ENCODE measurements at regions of chr16 and their contacts with region 1.

Region 1: DNA sequence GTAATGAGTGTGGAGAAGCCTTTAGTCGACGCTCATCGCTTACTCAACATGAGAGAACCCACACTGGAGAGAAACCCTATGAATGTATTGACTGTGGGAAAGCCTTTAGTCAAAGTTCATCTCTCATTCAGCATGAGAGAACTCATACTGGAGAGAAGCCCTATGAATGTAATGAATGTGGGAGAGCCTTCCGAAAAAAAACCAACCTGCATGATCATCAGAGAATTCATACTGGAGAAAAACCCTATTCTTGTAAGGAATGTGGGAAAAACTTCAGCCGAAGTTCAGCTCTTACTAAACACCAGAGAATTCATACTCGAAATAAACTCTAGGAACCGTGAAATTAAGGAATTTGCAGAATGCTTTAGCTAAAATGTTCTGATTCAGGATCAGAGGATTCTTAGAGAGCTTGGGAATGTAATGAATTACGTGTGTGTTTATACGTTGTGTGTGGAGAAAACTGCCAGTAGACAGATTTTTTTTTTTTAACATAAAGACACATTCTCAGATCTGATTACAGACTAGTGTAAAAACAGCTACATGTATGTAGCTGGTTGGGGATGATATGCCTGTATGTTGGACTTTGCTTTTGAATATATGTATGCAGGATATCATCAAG is 25.4 kb downstream of the ZFP90 start:
- DNase-seq: no peak
- ATAC-seq: no peak
- H3K4me3 ChIP-seq: no peak overlapping the region
- H3K27ac ChIP-seq: no peak overlapping the region
- H3K4me1 ChIP-seq: no peaks in the 10 kb centered on the region
- H3K27me3 ChIP-seq: no peaks in the 10 kb centered on the region
- CTCF ChIP-seq: no peak
- POLR2A ChIP-seq: no peak

Region 2: DNA sequence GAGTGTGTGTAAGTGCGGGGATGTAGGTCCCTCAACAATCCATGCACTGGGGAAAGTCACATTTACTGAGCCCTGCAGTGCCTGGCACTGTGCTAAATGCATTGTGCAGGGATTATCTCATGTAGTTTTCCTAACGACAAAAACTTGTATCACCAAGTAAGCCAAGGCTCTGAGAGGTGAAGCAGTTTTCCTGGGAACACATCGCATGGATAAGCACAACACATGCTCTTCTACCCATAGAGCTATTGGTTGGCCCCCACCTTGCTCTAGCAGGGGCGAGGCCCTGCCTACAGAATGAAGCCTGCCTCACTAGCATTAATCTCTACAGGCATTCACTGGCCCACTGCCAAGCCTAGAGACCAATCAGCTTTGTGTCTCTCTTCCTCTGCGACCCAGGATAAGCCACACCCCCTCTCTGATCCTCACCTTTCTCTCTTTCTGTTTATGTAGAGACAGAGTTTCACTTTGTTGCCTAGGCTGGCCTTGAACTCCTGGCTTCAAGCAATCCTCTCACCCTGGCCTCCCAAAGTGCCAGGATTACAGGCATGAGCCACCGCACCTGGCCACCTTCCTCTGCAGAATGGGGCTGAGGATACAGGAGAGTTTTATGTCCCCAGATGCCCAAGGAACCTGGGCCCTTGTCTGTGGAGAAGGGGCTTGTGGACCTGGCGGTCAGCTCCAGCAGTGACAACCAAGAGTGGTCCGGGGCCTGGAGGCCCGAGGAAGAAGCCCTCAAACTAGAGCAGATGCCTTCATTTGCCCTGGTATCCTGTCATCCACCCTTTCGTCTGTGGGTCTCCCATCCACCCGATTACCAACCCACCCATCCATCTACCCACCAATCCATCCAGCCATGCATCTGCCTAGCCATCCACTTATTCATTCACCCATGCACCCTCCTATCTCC is 1658.6 kb before region 1 on chr16:
- intact Hi-C with region 1: no loop called
- DNase-seq: peak in 4 of 5 donors; percentile 83 to 95 (median 86)
- ATAC-seq: peak; percentile 9 to 41 (median 26)
- H3K4me3 ChIP-seq: peak overlapping the region in 5 of 12 donors; percentile 45 to 58 (median 54)
- H3K27ac ChIP-seq: peak overlapping the region; percentile 77 to 100 (median 96)
- H3K4me1 ChIP-seq: peaks cover 0 to 70% (median 38%) of the 10 kb centered on the region in 12 donors
- H3K27me3 ChIP-seq: no peaks in the 10 kb centered on the region
- CTCF ChIP-seq: no peak
- POLR2A ChIP-seq: peak in 1 of 2 donors; percentile 37

Region 3: DNA sequence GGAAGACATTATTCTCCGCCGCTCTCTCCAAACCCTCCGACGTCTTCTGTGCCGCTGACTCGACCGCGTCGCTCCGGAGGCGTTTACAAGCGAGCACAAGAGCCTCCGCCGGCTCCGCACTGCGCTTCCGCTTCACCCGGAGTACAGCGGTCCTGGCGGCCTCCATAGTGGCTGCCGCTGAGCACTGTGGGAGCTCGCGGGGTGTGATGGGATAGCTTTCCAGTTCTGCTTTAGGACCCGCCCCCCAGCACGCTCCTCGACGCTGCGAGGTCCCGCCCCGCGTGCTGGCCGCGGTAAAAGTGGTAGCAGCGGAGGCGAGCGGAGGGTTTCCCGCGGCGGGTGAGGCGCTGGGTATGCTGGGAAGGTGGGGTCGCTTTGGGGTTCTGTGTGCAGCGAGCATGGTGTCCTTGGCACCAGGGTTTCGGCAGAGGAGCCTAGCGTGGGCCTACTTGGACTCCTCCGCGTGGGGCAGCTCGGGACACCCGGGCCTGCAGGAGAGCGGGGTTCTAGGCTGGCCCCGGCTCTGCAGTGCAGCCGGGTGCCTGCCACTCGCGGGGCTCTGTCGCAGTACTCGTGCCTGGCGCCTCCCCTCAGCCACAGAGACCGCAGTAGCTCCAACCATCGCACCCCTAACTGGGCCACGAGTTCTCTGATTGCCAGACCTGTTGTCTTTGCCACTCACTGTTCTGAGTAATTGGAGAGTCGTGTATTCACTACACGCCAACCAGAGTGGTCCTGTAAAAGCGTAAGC is 253.5 kb before region 1 on chr16 and contains the starts of genes PRMT7 and SLC7A6OS:
- intact Hi-C with region 1: no loop called
- DNase-seq: peak; percentile 91 to 94 (median 93)
- ATAC-seq: peak; percentile 100
- H3K4me3 ChIP-seq: peak within 1 kb of the TSS; percentile 69 to 98 (median 89)
- H3K27ac ChIP-seq: peak within 1 kb of the TSS; percentile 15 to 95 (median 83)
- H3K4me1 ChIP-seq: peaks cover 6 to 37% (median 26%) of the 10 kb centered on the region in 12 donors
- H3K27me3 ChIP-seq: no peaks in the 10 kb centered on the region
- CTCF ChIP-seq: peak in 7 of 12 donors; percentile 27 to 64 (median 39)
- POLR2A ChIP-seq: peak in 1 of 2 donors; percentile 76
- total RNA-seq, gene PRMT7: 21.9 to 34.0 (median 30.7) TPM
- total RNA-seq, gene SLC7A6OS: 8.1 to 16.2 (median 11.2) TPM

Region 4: GRCh38 chr16:68538880-68539701 is 25.4 kb before region 1 on chr16 and contains the start of gene ZFP90:
- intact Hi-C with region 1: no loop called
- DNase-seq: peak; percentile 88 to 95 (median 91)
- ATAC-seq: peak; percentile 96 to 100 (median 100)
- H3K4me3 ChIP-seq: peak within 1 kb of the TSS; percentile 71 to 100 (median 89)
- H3K27ac ChIP-seq: peak within 1 kb of the TSS; percentile 28 to 88 (median 78)
- H3K4me1 ChIP-seq: peaks cover 0 to 13% (median 6%) of the 10 kb centered on the region in 12 donors
- H3K27me3 ChIP-seq: no peaks in the 10 kb centered on the region
- CTCF ChIP-seq: peak in 1 of 12 donors; percentile 19
- POLR2A ChIP-seq: peak in 1 of 2 donors; percentile 71
- total RNA-seq, gene ZFP90: 6.9 to 18.1 (median 12.0) TPM

Region 5: DNA sequence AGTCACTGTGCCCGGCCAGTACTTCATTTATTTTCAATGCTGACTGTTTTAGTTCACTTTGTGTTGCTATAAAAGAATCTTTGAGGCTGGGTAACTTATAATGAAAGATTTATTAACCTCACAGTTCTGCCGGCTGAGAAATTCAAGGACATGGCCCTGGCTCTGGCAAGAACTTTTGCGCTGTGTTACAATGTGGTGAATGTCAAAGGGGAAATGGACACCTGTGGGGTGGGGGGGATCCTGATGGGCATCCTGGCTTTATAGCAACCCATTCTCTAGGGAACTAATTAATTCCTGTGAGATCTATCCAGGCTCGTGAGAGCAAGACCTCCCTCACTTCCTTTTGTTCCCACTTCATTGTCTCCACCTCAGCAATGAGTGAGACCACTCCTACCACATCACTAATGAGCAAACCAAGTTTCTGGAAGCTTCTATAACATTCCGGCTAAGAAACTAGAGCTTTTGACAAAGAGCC is 63.5 kb after region 1 on chr16:
- intact Hi-C with region 1: loop called in 1 of 10 experiments (anchors 10 kb)
- DNase-seq: no peak
- ATAC-seq: no peak
- H3K4me3 ChIP-seq: no peak overlapping the region
- H3K27ac ChIP-seq: no peak overlapping the region
- H3K4me1 ChIP-seq: no peaks in the 10 kb centered on the region
- H3K27me3 ChIP-seq: no peaks in the 10 kb centered on the region
- CTCF ChIP-seq: no peak
- POLR2A ChIP-seq: no peak

Region 6: DNA sequence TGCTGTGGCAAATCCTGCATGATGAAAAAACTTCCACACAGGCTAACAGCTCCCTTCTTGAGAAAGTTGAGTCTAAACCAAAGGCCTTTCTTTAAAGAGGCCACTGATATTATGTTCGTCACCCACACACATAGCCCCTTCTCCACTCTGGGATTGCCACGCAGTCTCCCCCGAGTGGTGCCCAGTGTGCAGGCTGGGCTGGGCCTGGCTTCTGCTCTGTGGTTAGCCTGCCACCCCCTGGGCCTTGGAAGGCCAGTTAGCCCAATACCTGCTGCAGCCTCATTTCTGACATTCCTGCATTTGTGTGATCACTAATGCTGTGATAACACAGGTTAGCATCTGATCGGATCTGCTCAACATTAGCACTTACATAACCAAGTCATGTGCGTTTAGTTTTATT is 125.4 kb after region 1 on chr16:
- intact Hi-C with region 1: no loop called
- DNase-seq: no peak
- ATAC-seq: no peak
- H3K4me3 ChIP-seq: no peak overlapping the region
- H3K27ac ChIP-seq: no peak overlapping the region
- H3K4me1 ChIP-seq: no peaks in the 10 kb centered on the region
- H3K27me3 ChIP-seq: no peaks in the 10 kb centered on the region
- CTCF ChIP-seq: no peak
- POLR2A ChIP-seq: no peak

Measured in heart left ventricle (tissue), 16 donors.